Endothelial cell of umbilical vein (primary cell): ENCODE measurements at regions of chr5 and their contacts with region 1.

Region 1: DNA sequence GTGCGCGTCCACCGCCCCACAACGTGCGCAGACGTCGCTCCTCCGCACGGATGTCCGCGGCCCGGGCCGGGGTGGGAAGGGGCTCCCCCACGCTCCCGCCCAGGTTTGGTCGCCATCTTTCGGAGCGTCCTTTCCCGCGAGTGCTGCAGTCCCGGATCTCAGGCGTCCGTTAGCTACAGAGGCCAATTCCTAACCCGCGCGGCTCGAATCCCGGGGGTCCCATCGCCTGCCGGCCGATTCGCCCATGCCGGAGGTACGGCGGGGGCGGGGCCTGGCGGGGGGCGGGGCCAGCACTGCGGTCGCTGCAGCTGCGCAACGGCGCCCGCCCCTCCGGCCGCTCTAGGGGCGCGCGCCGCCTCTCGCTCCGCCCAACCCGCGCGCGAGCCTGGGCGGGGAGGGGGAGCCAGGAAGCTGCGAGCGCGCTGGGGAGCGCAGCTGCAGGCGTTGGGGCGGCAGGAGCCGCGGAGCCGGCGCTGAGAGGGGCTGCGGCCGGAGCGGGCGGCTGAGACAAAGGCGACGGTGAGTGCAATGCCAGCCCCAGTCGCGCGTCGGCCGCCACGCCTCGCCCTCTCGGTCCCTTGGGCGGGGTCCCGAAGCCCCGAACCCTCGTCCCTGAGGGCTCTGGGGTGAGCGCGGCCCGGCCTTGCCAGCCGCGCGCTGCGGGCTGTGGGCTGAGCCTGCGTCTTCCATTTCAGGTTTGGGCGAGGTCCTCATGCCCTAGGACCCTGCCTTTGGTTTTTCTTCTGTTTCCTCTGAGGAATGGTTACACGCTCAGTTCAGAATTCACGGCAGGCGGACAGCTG is at the start of gene CDC42SE2:
- DNase-seq: peak; percentile 87
- H3K4me3 ChIP-seq: peak within 1 kb of the TSS; percentile 71 to 97 (median 96)
- H3K27ac ChIP-seq: peak within 1 kb of the TSS; percentile 82
- H3K4me1 ChIP-seq: peaks cover 26% of the 10 kb centered on the region
- H3K27me3 ChIP-seq: no peaks in the 10 kb centered on the region
- CTCF ChIP-seq: no peak
- POLR2A ChIP-seq: peak; percentile 93
- total RNA-seq, gene CDC42SE2: 21.2 and 21.9 TPM in 2 replicates

Region 2: DNA sequence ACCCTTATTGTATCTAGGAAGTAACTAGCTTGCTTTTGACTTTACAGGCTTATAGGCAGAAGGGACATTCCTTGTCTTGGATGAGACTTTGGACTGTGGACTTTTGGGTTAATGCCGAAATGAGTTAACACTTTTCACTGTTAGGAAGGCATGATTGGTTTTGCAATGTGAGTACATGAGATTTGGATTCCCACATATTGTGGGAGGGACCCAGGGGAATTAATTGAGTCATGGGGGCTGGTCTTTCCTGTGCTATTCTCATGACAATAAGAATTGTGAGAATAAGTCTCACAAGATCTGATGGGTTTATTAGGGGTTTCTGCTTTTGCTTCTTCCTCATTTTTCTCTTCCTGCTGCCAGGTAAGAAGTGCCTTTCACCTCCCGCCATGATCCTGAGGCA is 516.3 kb before region 1 on chr5:
- CTCF ChIA-PET with region 1: no interaction called
- POLR2A ChIA-PET with region 1: no interaction called
- dilution Hi-C with region 1: no loop called
- intact Hi-C with region 1: no loop called
- DNase-seq: no peak
- H3K4me3 ChIP-seq: no peak overlapping the region
- H3K27ac ChIP-seq: no peak overlapping the region
- H3K4me1 ChIP-seq: no peaks in the 10 kb centered on the region
- H3K27me3 ChIP-seq: no peaks in the 10 kb centered on the region
- CTCF ChIP-seq: no peak
- POLR2A ChIP-seq: no peak

Region 3: GRCh38 chr5:131165119-131165727 is 98.6 kb before region 1 on chr5 and contains the start of gene HINT1:
- CTCF ChIA-PET with region 1: interaction called, 9 read pairs
- POLR2A ChIA-PET with region 1: interaction called, 5 read pairs
- dilution Hi-C with region 1: no loop called
- intact Hi-C with region 1: loop called (anchors 1 kb)
- DNase-seq: peak; percentile 91
- H3K4me3 ChIP-seq: peak within 1 kb of the TSS; percentile 79 to 100 (median 99)
- H3K27ac ChIP-seq: peak within 1 kb of the TSS; percentile 95
- H3K4me1 ChIP-seq: peaks cover 11% of the 10 kb centered on the region
- H3K27me3 ChIP-seq: no peaks in the 10 kb centered on the region
- CTCF ChIP-seq: peak in 1 of 2 donors; percentile 22
- POLR2A ChIP-seq: peak; percentile 75
- total RNA-seq, gene HINT1: 217 and 221 TPM in 2 replicates

Region 4: GRCh38 chr5:131170540-131171275 is 93.1 kb before region 1 on chr5 and contains the start of gene LYRM7:
- CTCF ChIA-PET with region 1: interaction called, 5 read pairs
- POLR2A ChIA-PET with region 1: no interaction called
- dilution Hi-C with region 1: no loop called
- intact Hi-C with region 1: loop called (anchors 1 kb)
- DNase-seq: peak; percentile 99
- H3K4me3 ChIP-seq: peak within 1 kb of the TSS; percentile 38 to 81 (median 48)
- H3K27ac ChIP-seq: peak within 1 kb of the TSS; percentile 6
- H3K4me1 ChIP-seq: peaks cover 12% of the 10 kb centered on the region
- H3K27me3 ChIP-seq: no peaks in the 10 kb centered on the region
- CTCF ChIP-seq: no peak
- POLR2A ChIP-seq: peak; percentile 89
- total RNA-seq, gene LYRM7: 5.5 and 7.5 TPM in 2 replicates

Region 5: GRCh38 chr5:131274326-131275063 is 10.6 kb after region 1 on chr5:
- CTCF ChIA-PET with region 1: interaction called, 11 read pairs
- POLR2A ChIA-PET with region 1: interaction called, 4 read pairs
- dilution Hi-C with region 1: no loop called
- intact Hi-C with region 1: no loop called
- DNase-seq: no peak
- H3K4me3 ChIP-seq: no peak overlapping the region
- H3K27ac ChIP-seq: no peak overlapping the region
- H3K4me1 ChIP-seq: peaks cover 9% of the 10 kb centered on the region
- H3K27me3 ChIP-seq: no peaks in the 10 kb centered on the region
- CTCF ChIP-seq: no peak
- POLR2A ChIP-seq: no peak

Region 6: GRCh38 chr5:131382407-131383395 is 118.9 kb after region 1 on chr5:
- CTCF ChIA-PET with region 1: interaction called, 20 read pairs
- POLR2A ChIA-PET with region 1: interaction called, 13 read pairs
- dilution Hi-C with region 1: no loop called
- intact Hi-C with region 1: loop called (anchors 1 kb)
- DNase-seq: peak; percentile 47
- H3K4me3 ChIP-seq: no peak overlapping the region
- H3K27ac ChIP-seq: no peak overlapping the region
- H3K4me1 ChIP-seq: peaks cover 45% of the 10 kb centered on the region
- H3K27me3 ChIP-seq: no peaks in the 10 kb centered on the region
- CTCF ChIP-seq: peak; percentile 37 to 49
- POLR2A ChIP-seq: no peak